Kidney (tissue), 22 donors: ENCODE measurements at regions of chr18 and their contacts with region 1.

Region 1: DNA sequence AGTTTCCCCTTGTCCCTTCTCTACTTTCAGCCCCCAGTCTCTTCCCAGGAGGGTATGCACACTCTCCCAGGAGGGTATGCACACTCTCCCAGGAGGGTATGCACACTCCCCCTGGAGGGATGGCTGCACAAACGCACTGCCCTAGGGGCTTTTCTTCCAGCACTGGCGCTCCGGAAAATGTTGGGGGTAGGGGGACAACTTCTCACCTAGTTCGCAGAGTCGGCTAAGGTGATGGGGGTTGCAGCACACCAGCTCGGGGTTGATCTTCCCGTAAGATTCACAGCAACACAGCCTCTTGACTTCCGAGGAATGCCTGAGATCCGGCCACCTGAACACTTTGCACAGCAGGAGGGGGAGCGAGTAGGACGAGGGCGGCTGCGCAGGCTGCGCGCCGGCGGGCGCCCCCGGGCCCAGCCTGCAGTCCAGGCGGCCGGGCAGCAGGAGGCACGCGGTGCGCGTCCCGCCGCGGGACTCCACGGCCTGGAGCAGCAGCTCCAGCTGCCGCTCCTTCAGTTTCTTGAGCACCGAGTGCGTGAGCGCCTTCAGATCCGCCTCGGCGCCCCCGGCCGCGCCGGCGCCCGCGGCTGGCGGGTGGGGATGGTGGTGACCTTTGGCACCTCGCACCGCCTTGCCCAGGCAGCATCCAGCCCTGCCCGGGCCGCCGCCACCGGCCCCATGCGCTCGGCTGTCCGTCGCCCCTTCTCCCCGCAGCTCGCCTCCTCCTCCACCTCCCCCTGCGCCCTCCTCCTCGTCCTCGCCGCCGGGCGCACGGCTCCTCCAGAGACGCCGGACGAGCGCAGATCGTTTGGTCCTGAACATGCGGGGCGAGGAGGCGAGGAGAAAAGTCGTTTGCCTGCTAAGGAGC is 927 bp downstream of the SMAD7 start:
- DNase-seq: peak in 3 of 5 donors; percentile 61 to 82 (median 71)
- H3K4me3 ChIP-seq: peak overlapping the region; percentile 81 to 99 (median 90)
- H3K27ac ChIP-seq: peak overlapping the region; percentile 92
- H3K4me1 ChIP-seq: peaks cover 0 to 28% (median 22%) of the 10 kb centered on the region in 3 donors
- H3K27me3 ChIP-seq: no peaks in the 10 kb centered on the region
- CTCF ChIP-seq: no peak

Region 2: GRCh38 chr18:48842259-48843061 is 107.4 kb before region 1 on chr18:
- intact Hi-C with region 1: loop called (anchors 10 kb)
- DNase-seq: peak; percentile 86 to 95 (median 89)
- H3K4me3 ChIP-seq: no peak overlapping the region
- H3K27ac ChIP-seq: peak overlapping the region; percentile 74 to 90
- H3K4me1 ChIP-seq: peaks cover 0 to 38% (median 11%) of the 10 kb centered on the region in 3 donors
- H3K27me3 ChIP-seq: no peaks in the 10 kb centered on the region
- CTCF ChIP-seq: no peak